Gastrocnemius medialis (tissue), 4 donors: ENCODE measurements at regions of chr1 and their contacts with region 1.

Region 1: GRCh38 chr1:106957783-106958182 is 98.7 kb upstream of the PRMT6 start:
- DNase-seq: no peak
- ATAC-seq: no peak
- H3K4me3 ChIP-seq: no peak overlapping the region
- H3K27ac ChIP-seq: no peak overlapping the region
- H3K4me1 ChIP-seq: no peaks in the 10 kb centered on the region
- H3K27me3 ChIP-seq: no peaks in the 10 kb centered on the region
- CTCF ChIP-seq: no peak
- POLR2A ChIP-seq: no peak

Region 2: DNA sequence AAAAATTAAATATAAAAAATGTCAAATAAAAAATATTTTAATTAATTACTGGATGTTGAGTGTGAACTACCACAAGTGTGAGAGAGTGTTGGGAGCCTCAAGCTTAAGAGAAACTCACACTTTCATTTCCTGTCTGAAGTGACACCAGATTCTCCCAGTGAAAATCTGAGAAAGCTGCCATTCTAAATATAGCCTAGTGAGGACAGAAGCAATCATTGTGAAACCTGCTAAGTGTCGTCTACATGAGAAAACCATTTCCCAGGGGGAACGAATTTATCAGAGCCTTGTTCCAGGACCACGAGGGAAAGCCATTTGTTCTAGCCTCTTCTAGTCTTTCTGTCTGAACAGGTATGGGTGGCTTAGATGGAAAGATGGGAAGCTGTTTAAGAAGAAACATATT is 230.6 kb before region 1 on chr1:
- in situ Hi-C with region 1: no loop called
- intact Hi-C with region 1: no loop called
- DNase-seq: no peak
- ATAC-seq: no peak
- H3K4me3 ChIP-seq: no peak overlapping the region
- H3K27ac ChIP-seq: no peak overlapping the region
- H3K4me1 ChIP-seq: no peaks in the 10 kb centered on the region
- H3K27me3 ChIP-seq: no peaks in the 10 kb centered on the region
- CTCF ChIP-seq: no peak
- POLR2A ChIP-seq: no peak

Region 3: GRCh38 chr1:106897976-106898375 is 59.8 kb before region 1 on chr1:
- in situ Hi-C with region 1: loop called in 1 of 4 experiments (anchors 10 kb)
- intact Hi-C with region 1: no loop called
- DNase-seq: no peak
- ATAC-seq: no peak
- H3K4me3 ChIP-seq: no peak overlapping the region
- H3K27ac ChIP-seq: no peak overlapping the region
- H3K4me1 ChIP-seq: no peaks in the 10 kb centered on the region
- H3K27me3 ChIP-seq: no peaks in the 10 kb centered on the region
- CTCF ChIP-seq: no peak
- POLR2A ChIP-seq: no peak